K562 (cell line): ENCODE measurements at regions of chr22 and their contacts with region 1.

Region 1: DNA sequence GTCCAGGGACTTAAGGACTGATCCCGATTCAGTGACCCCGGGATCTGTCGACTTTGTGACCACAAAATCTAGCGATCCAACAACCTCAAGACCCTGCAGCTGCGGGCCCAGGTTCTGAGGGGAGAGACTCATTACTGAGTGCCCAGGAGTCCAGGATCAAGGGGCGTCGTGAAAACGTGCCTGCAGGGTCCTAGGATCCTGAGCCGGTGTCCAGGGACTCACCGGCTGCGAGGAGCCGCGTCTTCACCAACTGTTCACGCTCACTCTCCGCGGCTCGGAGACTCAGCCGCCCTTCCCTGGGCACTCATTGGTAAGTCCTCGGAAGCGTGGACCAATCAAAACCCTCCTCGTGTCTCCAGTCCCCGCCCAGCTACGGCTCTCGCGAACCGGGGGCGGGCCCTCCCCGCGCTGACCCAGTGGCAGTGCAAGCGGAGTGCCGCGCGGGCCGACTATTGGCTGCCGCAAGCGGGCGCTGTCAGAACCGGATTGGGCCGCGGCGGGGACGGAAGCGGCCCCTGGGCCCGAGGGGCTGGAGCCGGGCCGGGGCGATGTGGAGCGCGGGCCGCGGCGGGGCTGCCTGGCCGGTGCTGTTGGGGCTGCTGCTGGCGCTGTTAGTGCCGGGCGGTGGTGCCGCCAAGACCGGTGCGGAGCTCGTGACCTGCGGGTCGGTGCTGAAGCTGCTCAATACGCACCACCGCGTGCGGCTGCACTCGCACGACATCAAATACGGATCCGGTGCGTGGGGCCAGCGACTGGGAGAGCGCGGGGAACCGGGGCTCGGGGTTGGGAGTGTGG is at the start of gene SDF2L1:
- DNase-seq: peak; percentile 100
- ATAC-seq: peak; percentile 94
- H3K4me3 ChIP-seq: peak within 1 kb of the TSS; percentile 59
- H3K27ac ChIP-seq: peak within 1 kb of the TSS; percentile 83
- H3K4me1 ChIP-seq: peaks cover 31 to 57% of the 10 kb centered on the region in 2 experiments
- H3K27me3 ChIP-seq: no peaks in the 10 kb centered on the region; a peak in 1 of 5 replicates
- CTCF ChIP-seq: peak in 2 of 3 experiments; percentile 43 to 84; a peak in 3 of 6 replicates
- EP300 ChIP-seq: no peak; the same call in 1 of the 2 replicates
- POLR2A ChIP-seq: no peak
- RAD21 ChIP-seq: no peak
- polyA plus RNA-seq, gene SDF2L1: 15.1 to 34.8 TPM

Region 2: GRCh38 chr22:21587803-21588611 is 54.0 kb before region 1 on chr22:
- CTCF ChIA-PET with region 1: interaction called, 25 read pairs
- POLR2A ChIA-PET with region 1: interaction called, 4,622 read pairs
- in situ Hi-C with region 1: no loop called
- intact Hi-C with region 1: loop called (anchors 2 kb)
- DNase-seq: peak in 3 of 4 experiments; percentile 74 to 96 (median 93)
- ATAC-seq: peak; percentile 71
- H3K4me3 ChIP-seq: no peak overlapping the region
- H3K27ac ChIP-seq: peak overlapping the region; percentile 7
- H3K4me1 ChIP-seq: peaks cover 34 to 38% of the 10 kb centered on the region in 2 experiments
- H3K27me3 ChIP-seq: no peaks in the 10 kb centered on the region; a peak in 1 of 5 replicates
- CTCF ChIP-seq: no peak
- EP300 ChIP-seq: peak; percentile 88
- POLR2A ChIP-seq: no peak
- RAD21 ChIP-seq: peak; percentile 34 to 46

Region 3: DNA sequence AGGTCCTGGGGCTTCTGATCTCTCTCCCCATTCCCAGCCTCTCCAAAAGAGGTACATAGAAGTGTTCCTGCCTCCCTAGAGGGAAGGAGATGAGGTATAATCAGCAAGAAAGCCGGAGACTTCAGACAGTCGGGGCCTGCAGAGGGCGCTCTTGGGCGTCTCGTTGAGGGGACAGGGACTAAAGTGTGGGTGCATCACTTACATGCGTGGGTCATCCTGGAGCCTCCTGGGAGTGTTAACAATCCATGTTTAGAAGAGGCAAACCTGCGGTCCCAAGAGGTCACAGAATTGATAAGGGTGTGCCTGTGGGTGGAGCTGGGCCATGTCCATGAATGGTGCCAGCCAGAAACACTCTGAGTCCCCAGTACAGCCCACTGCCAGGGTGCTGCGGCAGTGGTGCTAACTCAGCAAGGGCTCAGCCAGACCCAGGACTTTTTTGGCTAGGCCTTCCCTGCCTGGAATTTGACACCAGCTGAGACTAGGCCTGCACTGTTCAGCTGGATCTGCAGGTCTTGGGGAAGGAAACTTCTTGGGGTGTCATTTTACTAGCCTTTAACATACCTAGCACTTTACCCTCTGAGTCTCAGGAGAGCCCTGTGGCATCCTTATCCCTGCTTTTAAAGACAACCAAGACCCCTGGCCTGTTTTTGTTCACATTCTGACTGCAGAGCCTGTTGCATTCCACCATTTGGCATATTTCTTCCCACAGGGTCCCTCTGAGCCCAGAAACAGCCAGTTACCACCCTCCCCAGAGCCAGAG is 17.7 kb before region 1 on chr22:
- CTCF ChIA-PET with region 1: interaction called, 99 read pairs
- POLR2A ChIA-PET with region 1: interaction called, 4,622 read pairs
- in situ Hi-C with region 1: no loop called
- intact Hi-C with region 1: loop called (anchors 1 kb)
- DNase-seq: peak; percentile 90 to 97 (median 94)
- ATAC-seq: peak; percentile 53
- H3K4me3 ChIP-seq: no peak overlapping the region
- H3K27ac ChIP-seq: peak overlapping the region; percentile 4; the same call in 2 of the 3 replicates
- H3K4me1 ChIP-seq: peaks cover 38 to 69% of the 10 kb centered on the region in 2 experiments
- H3K27me3 ChIP-seq: no peaks in the 10 kb centered on the region
- CTCF ChIP-seq: peak in 1 of 3 experiments; percentile 99; a peak in 2 of 6 replicates
- EP300 ChIP-seq: peak; percentile 57
- POLR2A ChIP-seq: no peak
- RAD21 ChIP-seq: no peak

Region 4: GRCh38 chr22:21652010-21652546 is 10.1 kb after region 1 on chr22:
- CTCF ChIA-PET with region 1: interaction called, 3 read pairs
- POLR2A ChIA-PET with region 1: interaction called, 4,622 read pairs
- in situ Hi-C with region 1: no loop called
- intact Hi-C with region 1: loop called (anchors 1 kb)
- DNase-seq: peak; percentile 100
- ATAC-seq: peak; percentile 94
- H3K4me3 ChIP-seq: peak overlapping the region; percentile 47
- H3K27ac ChIP-seq: peak overlapping the region; percentile 69
- H3K4me1 ChIP-seq: peaks cover 35 to 42% of the 10 kb centered on the region in 2 experiments
- H3K27me3 ChIP-seq: no peaks in the 10 kb centered on the region
- CTCF ChIP-seq: no peak
- EP300 ChIP-seq: peak; percentile 33; the same call in 1 of the 2 replicates
- POLR2A ChIP-seq: no peak
- RAD21 ChIP-seq: no peak

Region 5: GRCh38 chr22:21666786-21667185 is 24.8 kb after region 1 on chr22:
- CTCF ChIA-PET with region 1: no interaction called
- POLR2A ChIA-PET with region 1: interaction called, 77 read pairs
- in situ Hi-C with region 1: no loop called
- intact Hi-C with region 1: loop called (anchors 1 kb)
- DNase-seq: peak; percentile 73 to 80 (median 78)
- ATAC-seq: peak; percentile 29
- H3K4me3 ChIP-seq: peak overlapping the region; percentile 44
- H3K27ac ChIP-seq: peak overlapping the region; percentile 84
- H3K4me1 ChIP-seq: peaks cover 14 to 24% of the 10 kb centered on the region in 2 experiments; a peak in 4 of 5 replicates
- H3K27me3 ChIP-seq: no peaks in the 10 kb centered on the region
- CTCF ChIP-seq: no peak; a peak in 1 of 6 replicates
- EP300 ChIP-seq: no peak
- POLR2A ChIP-seq: no peak
- RAD21 ChIP-seq: no peak